ENCODE measurements at regions of chr16 and their contacts with region 1.

Region 1: GRCh38 chr16:14249291-14250032 is 178.3 kb downstream of the MRTFB start:
- DNase-seq: peak in 4 of 5 donors; percentile 49 to 74 (median 67)
- H3K4me3 ChIP-seq: no peak overlapping the region
- H3K27ac ChIP-seq: no peak overlapping the region
- H3K4me1 ChIP-seq: no peaks in the 10 kb centered on the region
- H3K27me3 ChIP-seq: no peaks in the 10 kb centered on the region
- CTCF ChIP-seq: peak; percentile 74

Region 2: GRCh38 chr16:14300705-14301168 is 51.3 kb after region 1 on chr16:
- intact Hi-C with region 1: no loop called
- DNase-seq: peak; percentile 66 to 87 (median 81)
- H3K4me3 ChIP-seq: peak overlapping the region in 1 of 3 donors; percentile 71
- H3K27ac ChIP-seq: no peak overlapping the region
- H3K4me1 ChIP-seq: peaks cover 0 to 3% (median 0%) of the 10 kb centered on the region in 3 donors
- H3K27me3 ChIP-seq: no peaks in the 10 kb centered on the region
- CTCF ChIP-seq: peak; percentile 70

Region 3: DNA sequence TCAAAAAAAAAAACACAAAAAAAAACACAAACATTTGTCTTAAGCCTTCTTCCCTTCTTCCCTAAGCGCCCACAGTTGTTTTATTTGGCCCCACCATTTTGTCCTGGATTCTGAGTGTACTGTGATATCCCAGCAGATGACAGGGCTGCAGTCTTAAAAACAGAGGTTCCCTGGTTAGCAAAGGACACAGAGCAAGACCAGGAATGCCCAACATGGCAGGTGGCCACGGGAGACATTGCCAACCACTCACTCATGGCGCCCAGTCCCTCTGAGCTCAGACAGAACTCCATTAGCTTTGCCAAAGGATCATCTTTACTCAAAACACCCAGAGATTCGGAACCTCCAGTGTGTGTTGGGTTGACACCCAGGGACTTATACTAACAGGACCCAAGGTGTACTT is 70.9 kb after region 1 on chr16:
- intact Hi-C with region 1: no loop called
- DNase-seq: no peak
- H3K4me3 ChIP-seq: no peak overlapping the region
- H3K27ac ChIP-seq: no peak overlapping the region
- H3K4me1 ChIP-seq: no peaks in the 10 kb centered on the region
- H3K27me3 ChIP-seq: no peaks in the 10 kb centered on the region
- CTCF ChIP-seq: no peak

Region 4: GRCh38 chr16:14534546-14534945 is 285.1 kb after region 1 on chr16:
- intact Hi-C with region 1: loop called (anchors 5 kb)
- DNase-seq: no peak
- H3K4me3 ChIP-seq: no peak overlapping the region
- H3K27ac ChIP-seq: no peak overlapping the region
- H3K4me1 ChIP-seq: no peaks in the 10 kb centered on the region
- H3K27me3 ChIP-seq: no peaks in the 10 kb centered on the region
- CTCF ChIP-seq: no peak